ENCODE measurements at regions of chrX and their contacts with region 1.

Region 1: GRCh38 chrX:113400193-113400704 is 559.6 kb upstream of the AMOT start:
- DNase-seq: no peak
- ATAC-seq: no peak
- H3K4me3 ChIP-seq: no peak overlapping the region
- H3K4me3 Mint-ChIP-seq: no peak overlapping the region
- H3K27ac ChIP-seq: no peak overlapping the region
- H3K27ac Mint-ChIP-seq: no peak overlapping the region
- H3K4me1 ChIP-seq: no peaks in the 10 kb centered on the region
- H3K4me1 Mint-ChIP-seq: no peaks in the 10 kb centered on the region
- H3K27me3 ChIP-seq: no peaks in the 10 kb centered on the region
- H3K27me3 Mint-ChIP-seq: no peaks in the 10 kb centered on the region
- CTCF ChIP-seq: no peak

Region 2: DNA sequence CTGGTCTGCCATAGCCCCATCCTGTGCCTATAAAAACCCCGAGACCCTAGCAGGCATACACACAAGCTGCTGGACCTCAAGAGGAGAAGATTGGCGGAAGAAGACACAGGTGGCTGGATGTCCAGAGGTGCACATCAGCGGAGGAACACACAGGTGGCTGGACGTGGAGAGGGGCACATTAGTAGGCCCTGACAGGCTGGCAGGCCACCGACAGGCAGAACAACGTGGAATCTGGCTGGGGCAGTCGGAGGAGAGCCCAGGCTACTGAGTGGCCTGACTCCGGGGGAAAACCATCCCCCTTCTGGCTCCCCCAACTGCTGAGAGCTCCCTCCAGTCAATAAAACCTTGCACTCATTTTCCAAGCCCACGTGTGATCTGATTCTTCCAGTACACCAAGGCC is 47.1 kb before region 1 on chrX:
- CTCF ChIA-PET with region 1: no interaction called
- POLR2A ChIA-PET with region 1: no interaction called
- intact Hi-C with region 1: loop called (anchors 1 kb)
- DNase-seq: no peak
- ATAC-seq: no peak
- H3K4me3 ChIP-seq: no peak overlapping the region
- H3K4me3 Mint-ChIP-seq: no peak overlapping the region
- H3K27ac ChIP-seq: no peak overlapping the region
- H3K27ac Mint-ChIP-seq: no peak overlapping the region
- H3K4me1 ChIP-seq: no peaks in the 10 kb centered on the region
- H3K4me1 Mint-ChIP-seq: no peaks in the 10 kb centered on the region
- H3K27me3 ChIP-seq: no peaks in the 10 kb centered on the region
- H3K27me3 Mint-ChIP-seq: no peaks in the 10 kb centered on the region
- CTCF ChIP-seq: no peak

Region 3: DNA sequence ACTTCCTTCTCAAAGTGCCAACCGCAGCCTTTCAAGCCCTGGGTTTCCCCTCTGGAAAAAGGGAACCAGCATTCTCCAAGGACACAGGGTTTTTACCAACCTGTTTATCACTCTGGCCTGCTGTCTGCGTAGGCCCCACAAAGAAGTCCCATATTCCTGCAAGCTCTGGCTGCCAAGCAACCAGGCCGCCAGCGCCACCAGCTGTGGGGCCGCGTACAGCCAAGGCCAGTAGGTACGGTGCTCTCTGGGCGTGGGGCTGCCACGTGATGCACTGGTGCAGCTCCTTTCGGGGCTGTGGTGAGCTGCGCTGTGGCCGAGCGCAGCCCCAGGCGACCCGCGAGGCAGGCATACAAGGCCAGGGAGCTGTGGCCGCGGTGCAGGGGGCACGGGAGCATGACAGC is 1911.4 kb after region 1 on chrX:
- CTCF ChIA-PET with region 1: no interaction called
- POLR2A ChIA-PET with region 1: no interaction called
- intact Hi-C with region 1: no loop called
- DNase-seq: no peak
- ATAC-seq: no peak
- H3K4me3 ChIP-seq: no peak overlapping the region
- H3K4me3 Mint-ChIP-seq: no peak overlapping the region
- H3K27ac ChIP-seq: no peak overlapping the region
- H3K27ac Mint-ChIP-seq: no peak overlapping the region
- H3K4me1 ChIP-seq: no peaks in the 10 kb centered on the region
- H3K4me1 Mint-ChIP-seq: no peaks in the 10 kb centered on the region
- H3K27me3 ChIP-seq: no peaks in the 10 kb centered on the region
- H3K27me3 Mint-ChIP-seq: no peaks in the 10 kb centered on the region
- CTCF ChIP-seq: no peak

Measured in B cell (primary cell).